ENCODE measurements at regions of chr2 and their contacts with region 1.

Region 1: GRCh38 chr2:112019569-112019982 is 35.5 kb upstream of the TMEM87B start:
- DNase-seq: no peak
- H3K4me3 ChIP-seq: no peak overlapping the region
- H3K27ac ChIP-seq: no peak overlapping the region
- H3K4me1 ChIP-seq: no peaks in the 10 kb centered on the region
- H3K27me3 ChIP-seq: peaks cover 12% of the 10 kb centered on the region
- CTCF ChIP-seq: no peak

Region 2: GRCh38 chr2:111954602-111955332 is 64.8 kb before region 1 on chr2:
- CTCF ChIA-PET with region 1: no interaction called
- dilution Hi-C with region 1: loop called (anchors 5 kb)
- in situ Hi-C with region 1: no loop called
- intact Hi-C with region 1: no loop called
- DNase-seq: no peak
- H3K4me3 ChIP-seq: no peak overlapping the region
- H3K27ac ChIP-seq: no peak overlapping the region
- H3K4me1 ChIP-seq: no peaks in the 10 kb centered on the region
- H3K27me3 ChIP-seq: peaks cover 9% of the 10 kb centered on the region
- CTCF ChIP-seq: no peak

Region 3: DNA sequence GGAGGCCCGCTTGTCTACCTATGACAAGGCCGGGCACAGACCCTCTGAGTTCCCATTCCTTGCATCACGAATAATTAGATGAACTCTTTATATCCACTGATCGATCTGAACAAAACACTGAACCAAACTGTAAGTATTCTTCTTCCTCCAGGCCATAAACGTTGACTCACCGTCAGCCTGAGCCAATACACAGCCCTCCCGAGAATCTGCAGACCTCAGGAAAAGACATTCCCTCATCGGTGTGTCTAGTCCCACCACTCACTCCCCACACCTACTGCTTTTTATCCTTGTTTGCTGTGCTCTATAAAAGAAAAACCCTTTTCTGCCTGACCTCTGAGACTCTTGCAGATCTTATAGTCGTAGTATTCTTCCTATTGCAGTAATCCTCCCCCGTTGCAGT is 76.5 kb after region 1 on chr2:
- CTCF ChIA-PET with region 1: no interaction called
- dilution Hi-C with region 1: no loop called
- in situ Hi-C with region 1: no loop called
- intact Hi-C with region 1: no loop called
- DNase-seq: no peak
- H3K4me3 ChIP-seq: no peak overlapping the region
- H3K27ac ChIP-seq: no peak overlapping the region
- H3K4me1 ChIP-seq: no peaks in the 10 kb centered on the region
- H3K27me3 ChIP-seq: no peaks in the 10 kb centered on the region
- CTCF ChIP-seq: no peak

Region 4: DNA sequence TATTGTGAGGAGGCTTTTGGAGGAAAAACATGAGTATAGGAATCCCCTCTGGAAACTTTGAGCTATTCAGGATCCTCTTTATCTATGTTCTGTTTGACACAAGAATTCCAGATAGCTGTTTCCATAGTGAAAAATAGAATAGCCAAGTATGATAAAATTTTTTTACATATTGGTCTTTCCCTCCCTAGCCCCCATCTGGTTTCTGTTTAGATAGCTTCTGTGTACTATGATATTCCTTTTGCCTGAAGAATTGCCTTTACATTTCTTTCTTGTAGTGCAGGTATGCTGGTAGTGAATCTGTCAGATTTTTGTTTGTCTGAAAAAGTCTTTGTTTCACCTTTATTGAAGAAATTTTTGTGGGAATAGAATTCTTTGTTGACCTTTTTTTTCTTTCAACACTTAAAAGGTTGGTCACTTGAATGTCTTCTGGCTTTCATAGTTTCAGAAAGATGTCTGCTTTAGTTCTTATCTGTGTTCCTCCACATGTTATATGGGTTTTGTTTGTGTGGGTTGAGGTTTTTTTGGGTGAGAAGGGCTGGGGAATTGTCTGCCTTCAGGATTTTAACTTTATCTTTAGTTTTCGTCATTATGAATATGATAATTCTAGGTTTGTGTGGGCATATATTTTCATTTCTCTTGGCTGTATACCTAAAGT is 88.7 kb after region 1 on chr2:
- CTCF ChIA-PET with region 1: no interaction called
- dilution Hi-C with region 1: no loop called
- in situ Hi-C with region 1: no loop called
- intact Hi-C with region 1: no loop called
- DNase-seq: no peak
- H3K4me3 ChIP-seq: no peak overlapping the region
- H3K27ac ChIP-seq: no peak overlapping the region
- H3K4me1 ChIP-seq: no peaks in the 10 kb centered on the region
- H3K27me3 ChIP-seq: no peaks in the 10 kb centered on the region
- CTCF ChIP-seq: no peak

Region 5: GRCh38 chr2:112187805-112188596 is 168.4 kb after region 1 on chr2:
- CTCF ChIA-PET with region 1: no interaction called
- dilution Hi-C with region 1: no loop called
- in situ Hi-C with region 1: no loop called
- intact Hi-C with region 1: no loop called
- DNase-seq: peak; percentile 65
- H3K4me3 ChIP-seq: no peak overlapping the region
- H3K27ac ChIP-seq: no peak overlapping the region
- H3K4me1 ChIP-seq: peaks cover 9% of the 10 kb centered on the region
- H3K27me3 ChIP-seq: no peaks in the 10 kb centered on the region
- CTCF ChIP-seq: no peak

Measured in mammary epithelial cell (primary cell).